IMR-90 (cell line): ENCODE measurements at regions of chr3 and their contacts with region 1.

Region 1: GRCh38 chr3:69739204-69740102 is at the start of gene MITF:
- DNase-seq: peak; percentile 88
- ATAC-seq: peak; percentile 98
- H3K4me3 ChIP-seq: peak within 1 kb of the TSS; percentile 86
- H3K27ac ChIP-seq: peak within 1 kb of the TSS; percentile 57
- H3K4me1 ChIP-seq: peaks cover 3% of the 10 kb centered on the region; the same call in 1 of the 2 replicates
- H3K27me3 ChIP-seq: peaks cover under 1% of the 10 kb centered on the region; the same call in 1 of the 2 replicates
- CTCF ChIP-seq: no peak
- POLR2A ChIP-seq: no peak
- RAD21 ChIP-seq: no peak
- total RNA-seq, gene MITF: 13.3 and 16.7 TPM in 2 replicates

Region 2: DNA sequence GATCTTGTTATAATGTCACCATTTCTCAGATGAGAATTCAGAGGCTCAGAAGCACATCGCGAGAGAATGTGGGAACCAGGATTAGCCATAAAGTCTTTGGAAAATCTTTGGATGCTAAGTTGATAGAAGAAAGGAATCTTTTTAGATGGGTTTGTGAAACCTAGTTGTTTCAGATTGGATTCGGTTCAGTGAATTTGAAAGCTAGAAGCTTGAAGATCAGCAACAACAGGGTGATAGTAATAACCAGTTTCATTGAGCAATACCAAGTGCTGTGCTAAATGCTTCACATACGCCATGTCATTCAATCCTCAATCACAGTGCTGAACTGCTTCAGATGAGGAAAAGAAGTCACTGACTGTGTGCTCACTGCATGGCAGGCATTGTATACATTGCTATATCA is 47.6 kb before region 1 on chr3:
- CTCF ChIA-PET with region 1: interaction called, 3 read pairs
- POLR2A ChIA-PET with region 1: no interaction called
- dilution Hi-C with region 1: no loop called
- in situ Hi-C with region 1: no loop called
- intact Hi-C with region 1: loop called (anchors 1 kb)
- DNase-seq: no peak
- ATAC-seq: no peak
- H3K4me3 ChIP-seq: no peak overlapping the region
- H3K27ac ChIP-seq: no peak overlapping the region
- H3K4me1 ChIP-seq: peaks cover 4% of the 10 kb centered on the region
- H3K27me3 ChIP-seq: peaks cover 3% of the 10 kb centered on the region
- CTCF ChIP-seq: no peak
- POLR2A ChIP-seq: no peak
- RAD21 ChIP-seq: no peak

Region 3: GRCh38 chr3:69784954-69785514 is 45.6 kb after region 1 on chr3:
- CTCF ChIA-PET with region 1: no interaction called
- POLR2A ChIA-PET with region 1: no interaction called
- dilution Hi-C with region 1: no loop called
- in situ Hi-C with region 1: no loop called
- intact Hi-C with region 1: loop called (anchors 2 kb)
- DNase-seq: peak; percentile 83
- ATAC-seq: peak; percentile 95
- H3K4me3 ChIP-seq: no peak overlapping the region
- H3K27ac ChIP-seq: peak overlapping the region; percentile 0; the same call in 1 of the 2 replicates
- H3K4me1 ChIP-seq: peaks cover 15% of the 10 kb centered on the region
- H3K27me3 ChIP-seq: no peaks in the 10 kb centered on the region
- CTCF ChIP-seq: no peak
- POLR2A ChIP-seq: no peak
- RAD21 ChIP-seq: 0 out of 2 replicates have a peak, but pooled peaks have one; percentile 12

Region 4: GRCh38 chr3:70067860-70068521 is 328.5 kb after region 1 on chr3:
- CTCF ChIA-PET with region 1: no interaction called
- POLR2A ChIA-PET with region 1: no interaction called
- dilution Hi-C with region 1: no loop called
- in situ Hi-C with region 1: no loop called
- intact Hi-C with region 1: no loop called
- DNase-seq: peak; percentile 25
- ATAC-seq: no peak
- H3K4me3 ChIP-seq: no peak overlapping the region
- H3K27ac ChIP-seq: no peak overlapping the region
- H3K4me1 ChIP-seq: no peaks in the 10 kb centered on the region
- H3K27me3 ChIP-seq: peaks cover 28% of the 10 kb centered on the region
- CTCF ChIP-seq: no peak
- POLR2A ChIP-seq: no peak
- RAD21 ChIP-seq: no peak